OCI-LY7 (cell line): ENCODE measurements at regions of chr10 and their contacts with region 1.

Region 1: DNA sequence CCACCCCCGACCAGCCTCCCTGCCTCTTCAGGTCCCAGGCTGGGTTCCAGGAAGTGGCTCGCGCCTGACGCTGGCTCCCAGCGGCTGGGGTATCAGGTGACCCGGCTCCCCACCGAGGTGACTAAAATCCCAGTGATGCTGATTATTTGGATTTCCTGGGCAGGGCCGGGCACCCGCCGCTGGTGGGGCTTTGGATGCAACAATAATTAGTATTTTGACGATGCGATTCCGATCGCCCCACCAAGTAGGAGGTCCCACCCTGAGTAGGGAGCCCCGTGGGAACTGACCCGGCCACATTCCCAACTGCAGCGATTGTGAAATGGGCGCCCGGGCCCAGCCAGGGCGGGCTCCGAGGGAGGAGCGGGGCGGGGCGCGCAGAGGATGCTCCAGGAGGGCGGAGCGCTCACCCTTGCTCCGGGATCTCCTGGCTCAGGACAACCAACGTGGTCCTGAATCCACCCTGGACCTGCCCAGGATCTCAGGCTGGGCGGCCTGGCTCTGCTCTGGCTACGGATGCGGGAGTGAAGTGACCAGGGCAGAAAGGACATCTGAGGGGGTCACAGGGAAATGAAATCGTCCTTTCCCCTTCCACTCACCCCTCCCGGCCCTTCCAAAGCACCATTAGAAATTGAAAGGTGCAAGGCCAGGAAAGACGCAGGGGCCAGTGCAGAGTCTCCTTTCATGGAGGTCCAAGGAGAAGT is 32.6 kb downstream of the DUSP5 start:
- DNase-seq: no peak
- H3K4me3 ChIP-seq: no peak overlapping the region
- H3K27ac ChIP-seq: no peak overlapping the region
- H3K4me1 ChIP-seq: peaks cover 52% of the 10 kb centered on the region
- CTCF ChIP-seq: no peak

Region 2: DNA sequence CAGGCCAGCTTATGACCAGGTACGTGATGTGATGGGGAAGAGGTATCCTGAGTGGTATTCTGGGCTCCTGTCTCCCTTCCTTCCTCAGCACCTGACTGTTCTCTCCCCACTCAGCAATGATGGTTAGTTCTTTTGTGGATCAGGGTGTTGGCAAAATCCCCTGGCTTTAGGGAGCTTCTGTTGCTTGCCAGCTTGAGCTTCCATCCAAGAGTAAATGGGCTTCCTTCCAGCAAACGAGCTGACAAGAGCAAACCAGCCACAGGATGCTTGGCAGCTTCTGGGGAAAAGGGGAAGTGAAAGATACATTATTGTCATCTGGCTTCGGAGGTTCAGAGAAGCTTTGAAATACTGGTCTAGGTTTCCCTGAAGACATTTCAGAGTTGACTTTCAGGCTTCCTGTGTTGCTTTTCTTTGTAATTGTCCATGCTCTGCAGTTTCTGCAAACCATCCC is 27.4 kb before region 1 on chr10:
- CTCF ChIA-PET with region 1: no interaction called
- POLR2A ChIA-PET with region 1: no interaction called
- intact Hi-C with region 1: loop called (anchors 2 kb)
- DNase-seq: peak; percentile 92
- H3K4me3 ChIP-seq: peak overlapping the region; percentile 20
- H3K27ac ChIP-seq: peak overlapping the region; percentile 36
- H3K4me1 ChIP-seq: peaks cover 49% of the 10 kb centered on the region
- CTCF ChIP-seq: no peak